ENCODE measurements at regions of chr3 and their contacts with region 1.

Region 1: GRCh38 chr3:142165194-142165593 is 15.8 kb upstream of the TFDP2 start:
- DNase-seq: no peak
- ATAC-seq: no peak
- H3K4me3 Mint-ChIP-seq: no peak overlapping the region
- H3K27ac Mint-ChIP-seq: no peak overlapping the region
- H3K4me1 Mint-ChIP-seq: no peaks in the 10 kb centered on the region
- H3K27me3 Mint-ChIP-seq: no peaks in the 10 kb centered on the region
- CTCF ChIP-seq: no peak

Region 2: DNA sequence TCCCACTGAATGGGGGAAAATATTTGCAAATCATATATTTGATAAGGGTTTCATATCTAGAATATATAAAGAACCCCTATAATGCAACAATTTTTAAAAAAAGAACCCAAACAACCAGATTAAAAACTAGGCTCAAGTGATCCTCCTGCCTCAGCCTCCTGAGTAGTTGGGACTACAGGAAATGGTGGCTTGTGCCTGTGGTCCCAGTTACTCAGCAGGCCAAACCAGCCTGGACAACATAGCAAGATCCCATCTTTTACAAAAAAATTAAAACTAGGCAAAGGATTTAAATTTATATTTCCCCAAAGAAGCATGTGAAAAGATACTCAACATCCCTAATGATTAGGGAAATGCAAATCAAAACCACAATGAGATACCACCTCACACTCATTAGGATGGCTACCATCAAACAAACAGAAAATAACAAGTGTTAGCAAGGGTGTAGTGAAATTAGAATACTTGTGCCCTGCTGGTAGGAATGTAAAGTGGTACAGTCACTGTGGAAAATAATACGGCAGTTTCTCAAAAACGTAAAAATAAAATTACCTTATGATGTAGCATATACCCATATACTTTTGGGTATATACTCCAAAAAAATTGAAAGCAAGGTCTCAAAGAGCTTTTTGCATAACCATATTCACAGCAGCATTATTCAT is 35.5 kb before region 1 on chr3:
- CTCF ChIA-PET with region 1: no interaction called
- POLR2A ChIA-PET with region 1: no interaction called
- intact Hi-C with region 1: no loop called
- DNase-seq: no peak
- ATAC-seq: no peak
- H3K4me3 Mint-ChIP-seq: no peak overlapping the region
- H3K27ac Mint-ChIP-seq: no peak overlapping the region
- H3K4me1 Mint-ChIP-seq: no peaks in the 10 kb centered on the region
- H3K27me3 Mint-ChIP-seq: no peaks in the 10 kb centered on the region
- CTCF ChIP-seq: no peak

Region 3: DNA sequence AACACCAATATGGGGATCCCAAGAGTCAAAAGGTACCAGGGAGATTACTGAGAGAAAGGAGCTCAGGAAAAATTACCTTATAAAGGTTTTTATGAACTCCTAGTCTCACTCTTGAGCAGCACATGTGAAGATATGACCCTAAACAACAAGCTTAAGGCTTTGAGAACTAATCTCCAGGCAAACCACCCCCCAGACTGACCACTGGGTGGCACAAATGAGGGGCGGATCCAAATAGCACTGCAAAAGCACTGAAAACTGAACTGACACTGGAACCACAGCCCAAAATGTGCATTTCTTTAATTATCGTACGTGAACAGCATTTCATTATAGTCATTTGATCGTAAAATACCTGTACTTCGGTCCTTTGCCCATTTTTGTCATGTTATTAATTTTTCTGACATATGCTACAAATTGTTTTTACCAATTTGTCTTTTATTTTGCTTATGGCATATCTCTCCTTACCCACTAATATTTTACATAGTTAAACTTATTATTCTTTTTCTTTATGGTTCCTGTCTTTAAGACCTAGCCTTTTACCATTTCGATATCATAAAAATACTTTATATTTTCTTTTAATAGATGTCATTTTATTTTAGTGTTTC is 15.7 kb after region 1 on chr3:
- CTCF ChIA-PET with region 1: interaction called, 10 read pairs
- POLR2A ChIA-PET with region 1: no interaction called
- intact Hi-C with region 1: no loop called
- DNase-seq: peak; percentile 43
- ATAC-seq: no peak
- H3K4me3 Mint-ChIP-seq: no peak overlapping the region
- H3K27ac Mint-ChIP-seq: no peak overlapping the region
- H3K4me1 Mint-ChIP-seq: no peaks in the 10 kb centered on the region
- H3K27me3 Mint-ChIP-seq: no peaks in the 10 kb centered on the region
- CTCF ChIP-seq: peak; percentile 27

Measured in activated CD8-positive, alpha-beta T cell treated with anti-CD3 and anti-CD28 coated beads for 36 hours (primary cell).